Adrenal gland (tissue), 19 donors: ENCODE measurements at regions of chr20 and their contacts with region 1.

Region 1: GRCh38 chr20:31661625-31662371 is 24.1 kb downstream of the COX4I2 start:
- DNase-seq: peak; percentile 77 to 90 (median 83)
- H3K4me3 ChIP-seq: peak overlapping the region in 1 of 4 donors; percentile 49
- H3K27ac ChIP-seq: peak overlapping the region in 3 of 5 donors; percentile 37 to 68 (median 64)
- H3K4me1 ChIP-seq: peaks cover 28 to 30% of the 10 kb centered on the region in 2 donors
- H3K27me3 ChIP-seq: no peaks in the 10 kb centered on the region
- CTCF ChIP-seq: peak; percentile 58 to 83 (median 72)
- POLR2A ChIP-seq: peak; percentile 24 to 34

Region 2: GRCh38 chr20:31723319-31724078 is 61.7 kb after region 1 on chr20:
- intact Hi-C with region 1: loop called (anchors 2 to 5 kb)
- DNase-seq: peak; percentile 97 to 99 (median 98)
- H3K4me3 ChIP-seq: peak overlapping the region; percentile 49 to 86 (median 74)
- H3K27ac ChIP-seq: peak overlapping the region; percentile 96 to 99 (median 97)
- H3K4me1 ChIP-seq: peaks cover 27 to 37% of the 10 kb centered on the region in 2 donors
- H3K27me3 ChIP-seq: no peaks in the 10 kb centered on the region
- CTCF ChIP-seq: peak; percentile 97 to 99 (median 99)
- POLR2A ChIP-seq: peak; percentile 43 to 51

Region 3: GRCh38 chr20:31835977-31836852 is 174.4 kb after region 1 on chr20:
- intact Hi-C with region 1: no loop called
- DNase-seq: peak; percentile 76 to 91 (median 89)
- H3K4me3 ChIP-seq: no peak overlapping the region
- H3K27ac ChIP-seq: peak overlapping the region in 1 of 5 donors; percentile 27
- H3K4me1 ChIP-seq: peaks cover 8 to 23% of the 10 kb centered on the region in 2 donors
- H3K27me3 ChIP-seq: no peaks in the 10 kb centered on the region
- CTCF ChIP-seq: no peak
- POLR2A ChIP-seq: no peak